ENCODE measurements at regions of chr14 and their contacts with region 1.

Region 1: DNA sequence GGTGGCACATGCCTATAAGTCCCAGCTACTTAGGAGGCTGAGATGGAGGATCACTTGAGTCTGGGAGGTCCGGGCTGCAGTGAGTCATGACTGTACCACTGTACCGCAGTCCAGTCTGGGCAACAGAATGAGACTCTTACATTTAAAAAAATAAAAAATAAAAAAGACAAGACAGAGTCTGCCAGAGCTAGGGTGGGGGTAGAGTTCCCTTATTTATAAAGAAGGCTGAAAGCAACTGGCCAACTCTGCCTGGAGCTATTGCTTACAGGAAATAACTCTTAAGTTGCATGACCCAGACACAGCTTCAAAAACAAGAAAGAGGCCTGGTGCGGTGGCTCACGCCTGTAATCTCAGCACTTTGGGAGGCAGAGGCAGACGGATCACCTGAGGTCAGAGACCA is 31.5 kb downstream of the NUMB start:
- DNase-seq: no peak
- ATAC-seq: no peak
- H3K4me3 ChIP-seq: no peak overlapping the region
- H3K27ac ChIP-seq: no peak overlapping the region
- H3K4me1 ChIP-seq: peaks cover 24% of the 10 kb centered on the region
- H3K27me3 ChIP-seq: no peaks in the 10 kb centered on the region
- CTCF ChIP-seq: no peak

Region 2: DNA sequence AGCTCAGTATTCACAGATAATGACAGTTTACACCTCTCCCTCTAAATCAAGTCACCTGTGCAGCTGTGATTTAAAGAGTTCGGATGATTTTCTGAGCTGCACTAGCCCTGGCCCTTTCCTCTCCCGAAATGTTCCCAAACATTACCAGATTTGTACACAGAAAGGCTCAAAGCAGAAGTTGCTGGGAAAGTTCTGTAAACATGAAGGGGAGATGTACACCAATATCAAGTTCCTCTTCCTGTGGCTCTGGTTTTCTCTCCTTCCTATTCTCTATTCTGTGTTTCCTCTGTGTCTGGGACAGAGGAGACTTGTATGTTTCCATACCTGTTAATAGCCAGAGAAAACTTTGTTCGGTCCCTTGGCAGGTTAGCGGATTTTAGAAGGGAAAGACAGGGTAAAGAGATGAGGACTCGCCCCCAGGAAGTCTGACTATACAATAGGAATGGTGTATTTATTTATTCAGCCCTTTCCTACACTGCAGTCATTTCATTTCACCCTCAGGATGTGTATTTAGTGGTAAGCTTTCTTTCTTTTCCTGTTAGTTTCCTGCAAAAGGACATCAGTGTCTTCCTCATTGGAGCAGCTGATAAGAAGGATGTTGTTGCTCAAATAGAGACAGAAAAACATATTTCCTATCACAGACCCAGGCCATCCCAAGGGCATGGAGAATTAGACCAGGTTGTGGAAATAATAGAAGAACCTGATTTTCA is 39.1 kb after region 1 on chr14:
- CTCF ChIA-PET with region 1: no interaction called
- POLR2A ChIA-PET with region 1: interaction called, 11 read pairs
- in situ Hi-C with region 1: no loop called
- intact Hi-C with region 1: no loop called
- DNase-seq: no peak
- ATAC-seq: no peak
- H3K4me3 ChIP-seq: no peak overlapping the region
- H3K27ac ChIP-seq: no peak overlapping the region
- H3K4me1 ChIP-seq: peaks cover 4% of the 10 kb centered on the region; the same call in 1 of the 2 replicates
- H3K27me3 ChIP-seq: no peaks in the 10 kb centered on the region
- CTCF ChIP-seq: no peak